Activated naive CD4-positive, alpha-beta T cell treated with anti-CD3 and anti-CD28 coated beads, Interleukin-2, amount 10 ng/mL, durations not matched to agents 7 days and 5 days (primary cell): ENCODE measurements at regions of chr11 and their contacts with region 1.

Region 1: GRCh38 chr11:118592616-118593367 is 14.6 kb upstream of the PHLDB1 start:
- DNase-seq: no peak
- H3K4me3 Mint-ChIP-seq: no peak overlapping the region
- H3K27ac Mint-ChIP-seq: no peak overlapping the region
- H3K4me1 Mint-ChIP-seq: peaks cover 19% of the 10 kb centered on the region
- H3K27me3 Mint-ChIP-seq: no peaks in the 10 kb centered on the region

Region 2: DNA sequence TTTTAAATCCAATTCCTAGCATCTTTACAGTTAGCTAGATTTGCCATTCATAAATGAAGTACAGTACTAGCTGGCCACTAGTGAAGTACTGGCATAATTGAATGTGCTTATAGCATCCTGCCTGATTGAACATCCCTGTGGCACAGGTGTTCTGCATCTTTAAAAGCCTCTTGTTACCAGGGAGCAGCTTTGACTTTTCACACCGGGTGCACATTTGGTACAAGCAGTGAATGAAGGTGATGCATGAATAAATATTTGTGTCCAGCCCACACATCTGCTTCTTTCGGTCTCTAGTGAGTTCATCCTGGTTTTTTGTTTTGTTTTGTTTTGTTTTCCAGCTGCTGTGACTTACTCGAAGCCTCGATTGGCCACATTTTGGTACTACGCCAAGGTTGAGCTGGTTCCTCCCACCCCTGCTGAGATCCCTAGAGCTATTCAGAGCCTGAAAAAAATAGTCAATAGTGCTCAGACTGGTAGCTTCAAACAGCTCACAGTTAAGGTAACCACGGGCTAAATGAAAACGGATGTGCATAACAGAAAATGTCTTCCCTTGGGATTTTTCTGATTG is 186.1 kb before region 1 on chr11:
- CTCF ChIA-PET with region 1: no interaction called
- DNase-seq: no peak
- H3K4me3 Mint-ChIP-seq: no peak overlapping the region
- H3K27ac Mint-ChIP-seq: no peak overlapping the region
- H3K4me1 Mint-ChIP-seq: peaks cover 32% of the 10 kb centered on the region
- H3K27me3 Mint-ChIP-seq: no peaks in the 10 kb centered on the region

Region 3: DNA sequence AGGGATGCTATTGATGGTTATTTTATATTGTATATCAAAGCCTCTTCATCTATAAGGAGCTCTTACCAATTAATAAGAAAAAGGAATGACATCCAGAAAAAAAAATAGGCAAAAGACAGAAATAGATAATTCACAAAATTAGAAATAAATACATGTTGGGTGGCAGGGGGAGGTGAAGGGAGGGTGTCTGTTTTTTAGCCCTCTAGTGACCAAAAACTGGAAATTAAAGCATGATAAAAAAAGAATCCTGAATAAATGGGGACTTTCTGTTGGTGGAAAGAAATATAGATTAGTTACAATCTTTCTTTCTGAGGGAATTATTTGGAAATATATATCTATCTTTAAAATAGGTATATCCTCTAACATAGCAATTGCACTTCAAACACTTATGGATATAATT is 107.5 kb before region 1 on chr11:
- CTCF ChIA-PET with region 1: no interaction called
- DNase-seq: no peak
- H3K4me3 Mint-ChIP-seq: no peak overlapping the region
- H3K27ac Mint-ChIP-seq: no peak overlapping the region
- H3K4me1 Mint-ChIP-seq: no peaks in the 10 kb centered on the region
- H3K27me3 Mint-ChIP-seq: no peaks in the 10 kb centered on the region

Region 4: DNA sequence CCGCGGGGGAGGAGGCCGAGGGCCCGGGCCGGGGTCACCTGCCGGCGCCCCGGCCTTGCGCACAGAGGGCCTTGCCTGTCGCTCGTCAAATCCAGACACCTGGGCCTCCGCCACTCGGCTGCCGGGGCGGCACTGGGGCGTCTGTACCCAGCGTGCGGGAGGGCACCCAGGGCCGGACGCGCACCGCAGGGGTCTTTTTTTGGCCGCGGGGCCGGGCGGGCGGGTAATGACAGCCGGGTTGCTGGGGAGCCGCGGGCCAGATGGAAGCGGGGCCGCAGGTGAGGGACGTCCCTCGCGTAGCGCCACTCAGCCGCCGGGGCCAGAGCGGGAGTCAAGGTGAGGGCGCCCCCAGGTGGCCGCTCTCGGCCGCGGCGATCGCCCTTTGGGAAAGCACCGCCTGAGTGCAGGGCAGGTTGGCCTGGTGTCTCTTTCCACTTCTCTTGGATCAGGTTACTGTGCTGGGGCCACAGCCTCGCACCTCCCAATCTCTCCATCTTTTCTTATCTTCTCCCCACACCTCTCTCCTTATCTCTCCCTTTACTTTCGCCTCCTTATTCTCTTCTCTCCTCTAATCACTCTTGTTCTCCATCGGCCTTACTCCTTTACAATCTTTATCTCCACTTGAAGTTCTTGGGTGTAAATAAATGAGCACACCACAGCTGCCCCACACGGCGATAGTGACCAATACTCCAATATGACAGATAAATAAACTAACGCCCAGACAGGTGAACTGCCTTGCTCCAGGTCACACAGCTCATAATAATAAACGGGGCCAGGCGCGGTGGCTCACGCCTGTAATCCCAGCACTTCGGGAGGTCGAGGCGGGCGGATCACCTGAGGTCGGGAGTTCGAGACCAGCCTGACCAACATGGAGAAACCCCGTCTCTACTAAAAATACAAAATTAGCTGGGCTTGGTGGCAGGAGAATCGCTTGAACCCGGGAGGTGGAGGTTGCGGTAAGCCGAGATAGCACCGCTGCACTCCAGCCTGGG is 18.3 kb after region 1 on chr11:
- CTCF ChIA-PET with region 1: interaction called, 46 read pairs
- DNase-seq: peak; percentile 87
- H3K4me3 Mint-ChIP-seq: peak overlapping the region; percentile 43
- H3K27ac Mint-ChIP-seq: no peak overlapping the region
- H3K4me1 Mint-ChIP-seq: peaks cover 24% of the 10 kb centered on the region
- H3K27me3 Mint-ChIP-seq: peaks cover 79% of the 10 kb centered on the region

Region 5: GRCh38 chr11:118659314-118659952 is 66.6 kb after region 1 on chr11:
- CTCF ChIA-PET with region 1: interaction called, 55 read pairs
- DNase-seq: peak; percentile 95
- H3K4me3 Mint-ChIP-seq: no peak overlapping the region
- H3K27ac Mint-ChIP-seq: no peak overlapping the region
- H3K4me1 Mint-ChIP-seq: peaks cover 6% of the 10 kb centered on the region
- H3K27me3 Mint-ChIP-seq: peaks cover 29% of the 10 kb centered on the region